AG04449 (cell line): ENCODE measurements at regions of chr15 and their contacts with region 1.

Region 1: DNA sequence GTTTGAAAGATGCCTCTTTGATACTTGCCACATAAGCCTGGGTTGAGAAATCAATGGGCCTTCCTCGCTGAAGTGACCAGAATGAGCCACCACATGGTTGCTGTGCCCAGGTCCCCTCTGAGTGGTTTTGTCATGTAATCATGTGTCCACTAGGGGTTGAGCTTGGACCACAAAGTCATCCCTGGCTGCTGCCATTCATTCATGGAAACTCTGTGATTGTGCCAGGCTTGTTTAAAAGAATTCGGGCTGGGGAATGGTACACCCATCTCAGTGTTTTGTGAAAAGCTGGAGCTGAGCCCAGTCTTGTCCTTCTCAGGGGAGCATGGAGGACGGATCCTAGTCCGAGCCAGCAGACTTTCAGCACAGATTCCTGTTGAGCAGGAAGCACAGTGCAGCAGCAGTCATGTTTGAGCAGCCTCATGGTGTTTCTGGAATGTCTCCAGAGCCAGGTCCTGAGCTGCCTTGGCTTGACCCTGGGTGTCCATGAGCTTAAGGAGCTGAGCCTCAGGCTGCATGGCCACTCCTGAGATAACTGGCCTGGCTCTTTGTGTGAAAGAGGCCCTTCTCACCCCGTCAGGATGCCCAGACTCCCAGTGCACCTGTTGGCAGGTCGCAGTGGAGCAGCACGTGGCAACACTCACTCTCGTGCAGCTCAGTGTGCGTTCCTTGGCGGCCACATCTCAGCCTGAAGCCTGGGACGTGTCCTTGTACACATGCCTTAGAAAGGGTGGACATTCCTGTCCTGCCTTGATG is 260.3 kb upstream of the TPM1 start:
- DNase-seq: peak; percentile 70
- H3K4me3 ChIP-seq: no peak overlapping the region
- CTCF ChIP-seq: peak; percentile 76

Region 2: DNA sequence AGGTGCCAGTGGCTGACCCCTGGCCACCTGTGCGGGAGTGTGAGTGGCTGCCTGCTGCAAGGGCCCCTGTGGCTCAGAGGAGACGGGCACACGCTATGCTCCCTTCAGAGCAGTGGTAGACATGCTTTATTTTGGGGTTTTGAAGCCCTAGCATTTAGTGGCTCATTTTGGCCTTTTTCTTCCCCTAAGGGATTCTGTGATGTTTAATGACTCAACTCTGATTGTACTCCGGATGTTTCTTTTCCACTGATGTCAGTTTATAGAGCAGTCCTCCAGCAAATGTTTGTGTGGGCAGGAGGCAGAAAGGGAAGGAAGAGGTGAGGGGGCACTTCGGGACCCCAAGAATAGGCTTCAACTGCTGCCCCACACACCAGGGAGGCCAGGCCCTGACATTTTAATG is 328.2 kb before region 1 on chr15:
- CTCF ChIA-PET with region 1: no interaction called
- POLR2A ChIA-PET with region 1: no interaction called
- DNase-seq: no peak
- H3K4me3 ChIP-seq: no peak overlapping the region
- CTCF ChIP-seq: no peak

Region 3: GRCh38 chr15:62792986-62793751 is 11.0 kb after region 1 on chr15:
- CTCF ChIA-PET with region 1: interaction called, 10 read pairs
- POLR2A ChIA-PET with region 1: no interaction called
- DNase-seq: no peak
- H3K4me3 ChIP-seq: no peak overlapping the region
- CTCF ChIP-seq: no peak